ENCODE measurements at regions of chr9 and their contacts with region 1.

Region 1: DNA sequence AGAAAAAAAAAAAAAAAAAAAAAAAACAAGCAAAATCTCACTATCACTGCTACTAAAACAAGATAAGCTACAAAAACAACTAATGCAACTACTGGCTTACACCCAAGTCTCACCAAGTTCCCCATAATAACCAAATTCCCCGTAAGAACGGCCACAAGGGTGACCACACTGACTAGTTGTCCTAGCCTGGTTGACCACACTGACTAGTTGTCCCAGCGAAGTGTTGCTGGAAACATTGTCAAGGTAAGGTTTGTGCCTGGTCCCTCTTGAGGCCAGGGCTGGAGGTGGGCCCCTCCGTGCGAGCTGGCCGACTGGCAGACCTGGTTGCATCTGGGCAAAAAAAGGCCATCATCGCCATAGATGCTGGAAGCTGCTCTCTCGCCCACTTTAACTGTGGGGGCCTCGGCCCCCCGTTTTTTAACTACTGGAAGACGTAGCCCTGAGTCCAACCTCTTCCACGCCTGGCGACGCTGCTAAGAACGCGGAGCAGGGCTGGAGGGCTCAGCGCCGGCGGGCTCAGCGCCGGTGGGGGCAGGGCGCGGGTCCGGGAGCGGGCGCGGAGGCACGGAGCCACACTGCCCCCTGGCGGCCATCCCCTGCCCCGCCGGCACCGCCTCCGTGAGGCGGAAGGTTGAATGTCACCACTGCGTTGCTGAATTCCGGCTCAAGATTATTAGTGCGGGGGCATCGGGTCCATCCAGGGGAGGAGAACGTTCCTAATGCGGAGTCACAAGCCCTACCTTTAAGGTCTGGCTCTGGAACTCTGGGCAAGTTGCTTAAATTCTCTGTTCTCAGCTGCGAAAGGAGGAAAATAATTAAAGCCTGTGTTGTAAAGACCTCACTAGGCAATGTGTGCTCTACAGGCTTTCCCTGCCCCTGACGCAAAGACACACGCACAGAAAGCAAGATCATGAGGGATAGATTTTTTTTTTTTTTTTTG is 84.0 kb downstream of the HSD17B3 start:
- DNase-seq: peak; percentile 82 to 85
- ATAC-seq: peak; percentile 91 to 92 (median 92)
- H3K4me3 ChIP-seq: no peak overlapping the region
- H3K4me3 Mint-ChIP-seq: peak overlapping the region; percentile 55
- H3K27ac ChIP-seq: no peak overlapping the region
- H3K27ac Mint-ChIP-seq: peak overlapping the region in 1 of 2 donors; percentile 29
- H3K4me1 ChIP-seq: peaks cover 25% of the 10 kb centered on the region
- H3K4me1 Mint-ChIP-seq: peaks cover 4 to 21% of the 10 kb centered on the region in 2 donors
- H3K27me3 ChIP-seq: peaks cover 20% of the 10 kb centered on the region
- H3K27me3 Mint-ChIP-seq: peaks cover 39 to 63% of the 10 kb centered on the region in 2 donors
- CTCF ChIP-seq: peak; percentile 99

Region 2: DNA sequence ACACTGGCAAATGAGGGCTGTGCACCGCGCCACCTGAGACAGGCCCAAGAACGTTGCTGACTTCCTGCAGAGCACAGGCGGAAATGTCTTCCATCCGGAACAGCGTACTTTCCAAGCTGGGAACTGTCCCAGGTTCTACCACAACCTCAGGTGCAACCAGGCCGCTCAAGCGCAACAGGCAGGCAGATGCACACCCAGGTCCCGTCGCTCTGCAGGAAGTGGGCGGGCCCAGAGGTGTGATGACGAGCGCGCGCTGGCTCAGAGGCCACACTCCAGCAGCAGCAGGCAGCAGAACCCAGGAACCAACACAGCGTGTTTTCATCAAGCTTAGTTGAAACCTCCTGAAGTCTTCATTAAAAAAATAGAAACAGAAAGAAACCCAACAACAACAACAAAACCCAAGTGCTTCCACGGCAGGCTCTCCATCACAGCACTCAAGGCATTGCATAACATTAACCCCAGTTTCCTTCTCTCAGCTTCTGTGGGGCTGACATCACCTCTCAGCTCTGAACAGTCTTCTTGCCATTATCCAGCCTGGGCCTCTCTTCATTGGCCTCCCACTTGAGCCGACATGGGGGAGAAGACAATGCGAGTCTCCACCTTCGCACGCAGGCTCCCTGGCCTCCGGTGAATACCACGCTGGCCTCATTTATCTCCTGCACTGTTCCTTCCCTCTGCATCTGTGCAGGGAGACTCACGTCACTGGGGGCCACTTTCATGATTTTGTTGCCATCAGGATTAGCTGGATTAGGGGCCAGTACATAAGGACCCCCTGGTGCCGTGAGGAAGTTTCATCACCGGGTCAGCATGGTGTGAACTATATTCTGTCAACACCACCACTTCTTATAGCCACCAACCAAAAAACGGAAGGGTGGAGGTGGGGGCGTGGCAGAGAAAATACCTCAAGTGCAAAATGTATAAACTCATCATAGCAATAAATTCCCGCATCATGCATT is 723.3 kb before region 1 on chr9:
- intact Hi-C with region 1: loop called (anchors 10 kb)
- DNase-seq: peak; percentile 72 to 94
- ATAC-seq: peak; percentile 86 to 91 (median 90)
- H3K4me3 ChIP-seq: peak overlapping the region; percentile 38
- H3K4me3 Mint-ChIP-seq: peak overlapping the region; percentile 98
- H3K27ac ChIP-seq: peak overlapping the region; percentile 96
- H3K27ac Mint-ChIP-seq: peak overlapping the region; percentile 96 to 99
- H3K4me1 ChIP-seq: peaks cover 44% of the 10 kb centered on the region
- H3K4me1 Mint-ChIP-seq: peaks cover 66% of the 10 kb centered on the region in 2 donors
- H3K27me3 ChIP-seq: no peaks in the 10 kb centered on the region
- H3K27me3 Mint-ChIP-seq: peaks cover 0 to 9% of the 10 kb centered on the region in 2 donors
- CTCF ChIP-seq: no peak

Measured in natural killer cell (primary cell).